Mammary epithelial cell (primary cell): ENCODE measurements at regions of chr5 and their contacts with region 1.

Region 1: DNA sequence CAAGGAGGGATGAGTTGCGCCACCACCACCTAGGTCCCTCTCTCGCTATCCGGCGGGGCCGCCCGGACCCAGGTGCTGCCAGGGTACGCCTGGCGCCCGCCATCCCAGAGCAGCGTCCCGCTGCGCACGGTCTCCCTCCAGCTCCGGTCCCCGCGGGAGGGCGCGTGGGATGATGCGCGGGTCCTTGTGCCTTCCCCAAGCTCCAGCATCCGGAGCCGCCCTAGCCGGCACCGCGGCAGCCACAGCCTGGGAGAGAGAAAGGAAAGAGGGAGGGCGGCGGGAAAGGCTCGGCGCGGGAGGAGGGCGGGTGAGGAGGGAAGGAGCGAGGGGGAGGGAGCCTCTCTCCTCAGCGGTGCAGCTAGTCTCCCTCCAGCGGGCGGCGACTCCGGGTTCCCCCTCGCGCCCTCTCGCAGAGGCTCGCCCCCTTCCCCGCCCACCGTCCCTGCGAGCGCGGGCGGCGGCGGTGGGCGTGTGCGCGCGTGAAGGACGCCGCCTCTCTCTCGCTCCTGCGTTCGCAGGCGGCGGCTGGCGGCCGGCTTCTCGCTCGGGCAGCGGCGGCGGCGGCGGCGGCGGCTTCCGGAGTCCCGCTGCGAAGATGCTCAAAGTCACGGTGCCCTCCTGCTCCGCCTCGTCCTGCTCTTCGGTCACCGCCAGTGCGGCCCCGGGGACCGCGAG is at the start of gene CAMK4:
- DNase-seq: peak; percentile 81
- H3K4me3 ChIP-seq: peak within 1 kb of the TSS; percentile 73 to 79 (median 77)
- H3K27ac ChIP-seq: no peak within 1 kb of the TSS
- H3K4me1 ChIP-seq: peaks cover 26% of the 10 kb centered on the region
- H3K27me3 ChIP-seq: no peaks in the 10 kb centered on the region
- CTCF ChIP-seq: peak in 1 of 2 donors; percentile 19
- total RNA-seq, gene CAMK4: 1.5 to 9.4 TPM

Region 2: GRCh38 chr5:111266491-111266890 is 42.5 kb after region 1 on chr5:
- CTCF ChIA-PET with region 1: no interaction called
- dilution Hi-C with region 1: no loop called
- in situ Hi-C with region 1: no loop called
- intact Hi-C with region 1: loop called (anchors 5 kb)
- DNase-seq: peak; percentile 95
- H3K4me3 ChIP-seq: no peak overlapping the region
- H3K27ac ChIP-seq: no peak overlapping the region
- H3K4me1 ChIP-seq: peaks cover 23% of the 10 kb centered on the region
- H3K27me3 ChIP-seq: no peaks in the 10 kb centered on the region
- CTCF ChIP-seq: no peak

Region 3: GRCh38 chr5:111345728-111346127 is 121.7 kb after region 1 on chr5:
- CTCF ChIA-PET with region 1: no interaction called
- dilution Hi-C with region 1: no loop called
- in situ Hi-C with region 1: no loop called
- intact Hi-C with region 1: no loop called
- DNase-seq: peak; percentile 2
- H3K4me3 ChIP-seq: no peak overlapping the region
- H3K27ac ChIP-seq: no peak overlapping the region
- H3K4me1 ChIP-seq: peaks cover 11% of the 10 kb centered on the region
- H3K27me3 ChIP-seq: no peaks in the 10 kb centered on the region
- CTCF ChIP-seq: no peak

Region 4: GRCh38 chr5:111461255-111461671 is 237.2 kb after region 1 on chr5:
- CTCF ChIA-PET with region 1: no interaction called
- dilution Hi-C with region 1: no loop called
- in situ Hi-C with region 1: no loop called
- intact Hi-C with region 1: loop called (anchors 5 kb)
- DNase-seq: peak; percentile 38
- H3K4me3 ChIP-seq: no peak overlapping the region
- H3K27ac ChIP-seq: no peak overlapping the region
- H3K4me1 ChIP-seq: no peaks in the 10 kb centered on the region
- H3K27me3 ChIP-seq: no peaks in the 10 kb centered on the region
- CTCF ChIP-seq: peak; percentile 43 to 68